Kidney (tissue), 22 donors: ENCODE measurements at regions of chr11 and their contacts with region 1.

Region 1: GRCh38 chr11:8219257-8220021 is 44.2 kb downstream of the LMO1 start:
- DNase-seq: peak in 4 of 5 donors; percentile 42 to 60 (median 52)
- H3K4me3 ChIP-seq: no peak overlapping the region
- H3K27ac ChIP-seq: no peak overlapping the region
- H3K4me1 ChIP-seq: no peaks in the 10 kb centered on the region
- H3K27me3 ChIP-seq: no peaks in the 10 kb centered on the region
- CTCF ChIP-seq: peak; percentile 45

Region 2: DNA sequence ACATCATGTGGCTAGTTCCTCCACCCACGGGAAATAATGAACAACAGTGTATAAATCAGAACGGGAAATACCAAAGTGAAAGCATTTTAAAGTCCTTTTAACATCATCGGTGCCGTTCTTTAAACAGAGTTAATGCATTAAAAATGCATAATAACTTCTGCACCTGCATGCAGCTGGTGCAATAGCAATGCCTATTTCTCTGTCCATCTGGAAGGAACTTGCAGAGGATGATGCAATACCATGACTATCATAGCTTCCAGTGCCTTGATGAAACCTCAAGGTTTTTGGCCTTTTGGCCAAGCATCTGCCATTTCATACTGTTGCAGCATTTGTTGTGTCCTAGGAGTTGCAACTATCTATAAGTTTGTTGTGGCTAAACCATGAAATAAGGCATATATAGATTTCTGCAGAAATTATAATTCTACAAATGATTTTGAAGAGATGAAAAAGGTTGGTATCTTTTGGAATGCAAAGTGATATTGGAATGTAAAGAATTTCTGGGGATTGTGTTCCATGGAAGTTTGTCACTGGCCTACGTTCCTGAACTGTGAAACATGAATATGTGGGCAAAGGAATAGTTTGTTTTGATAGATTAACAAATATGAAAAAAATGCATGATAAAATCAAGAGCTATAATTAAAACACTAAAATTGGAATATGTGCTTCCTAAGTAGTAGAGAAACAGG is 242.1 kb before region 1 on chr11:
- intact Hi-C with region 1: no loop called
- DNase-seq: no peak
- H3K4me3 ChIP-seq: peak overlapping the region in 1 of 3 donors; percentile 15
- H3K27ac ChIP-seq: no peak overlapping the region
- H3K4me1 ChIP-seq: no peaks in the 10 kb centered on the region
- H3K27me3 ChIP-seq: no peaks in the 10 kb centered on the region
- CTCF ChIP-seq: no peak

Region 3: DNA sequence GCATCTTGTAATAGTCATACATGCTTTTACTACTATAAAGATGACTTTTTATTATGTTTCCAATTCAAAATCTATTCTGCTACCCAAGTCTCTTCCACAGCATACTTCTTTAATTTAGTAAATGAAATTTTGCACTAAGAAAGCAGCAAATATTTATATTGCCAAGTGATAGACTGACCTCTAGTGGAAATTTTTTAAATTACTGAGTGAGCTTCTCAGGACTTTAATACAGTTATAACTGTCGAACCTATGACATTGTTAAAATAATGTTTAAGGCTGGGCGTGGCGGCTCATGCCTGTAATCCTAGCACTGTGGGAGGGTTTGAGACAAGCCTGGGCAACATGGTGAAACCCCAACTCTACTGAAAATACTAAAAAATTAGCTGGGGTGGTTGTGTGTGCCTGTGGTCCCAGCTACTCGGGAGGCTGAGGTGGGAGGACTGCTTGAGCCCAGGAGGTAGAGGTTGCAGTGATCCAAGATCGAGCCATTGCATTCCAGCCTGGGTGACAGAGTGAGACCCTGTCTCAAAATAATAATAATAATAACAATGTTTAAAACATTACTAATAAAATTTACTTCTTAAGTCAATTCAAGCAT is 347.3 kb after region 1 on chr11:
- intact Hi-C with region 1: loop called (anchors 5 kb)
- DNase-seq: peak in 3 of 5 donors; percentile 31 to 65 (median 62)
- H3K4me3 ChIP-seq: no peak overlapping the region
- H3K27ac ChIP-seq: no peak overlapping the region
- H3K4me1 ChIP-seq: no peaks in the 10 kb centered on the region
- H3K27me3 ChIP-seq: no peaks in the 10 kb centered on the region
- CTCF ChIP-seq: peak; percentile 56